PC-9 (cell line): ENCODE measurements at regions of chr3 and their contacts with region 1.

Region 1: GRCh38 chr3:184371570-184372018 is 6.4 kb downstream of the THPO start:
- DNase-seq: peak; percentile 84 to 89
- H3K4me3 ChIP-seq: no peak overlapping the region
- H3K27ac ChIP-seq: no peak overlapping the region
- H3K4me1 ChIP-seq: no peaks in the 10 kb centered on the region
- H3K27me3 ChIP-seq: peaks cover 35% of the 10 kb centered on the region
- CTCF ChIP-seq: peak; percentile 99

Region 2: GRCh38 chr3:183775781-183776180 is 595.8 kb before region 1 on chr3:
- CTCF ChIA-PET with region 1: no interaction called
- POLR2A ChIA-PET with region 1: no interaction called
- intact Hi-C with region 1: no loop called
- DNase-seq: no peak
- H3K4me3 ChIP-seq: no peak overlapping the region
- H3K27ac ChIP-seq: peak overlapping the region; percentile 5; the same call in 1 of the 2 replicates
- H3K4me1 ChIP-seq: no peaks in the 10 kb centered on the region
- H3K27me3 ChIP-seq: no peaks in the 10 kb centered on the region
- CTCF ChIP-seq: no peak

Region 3: DNA sequence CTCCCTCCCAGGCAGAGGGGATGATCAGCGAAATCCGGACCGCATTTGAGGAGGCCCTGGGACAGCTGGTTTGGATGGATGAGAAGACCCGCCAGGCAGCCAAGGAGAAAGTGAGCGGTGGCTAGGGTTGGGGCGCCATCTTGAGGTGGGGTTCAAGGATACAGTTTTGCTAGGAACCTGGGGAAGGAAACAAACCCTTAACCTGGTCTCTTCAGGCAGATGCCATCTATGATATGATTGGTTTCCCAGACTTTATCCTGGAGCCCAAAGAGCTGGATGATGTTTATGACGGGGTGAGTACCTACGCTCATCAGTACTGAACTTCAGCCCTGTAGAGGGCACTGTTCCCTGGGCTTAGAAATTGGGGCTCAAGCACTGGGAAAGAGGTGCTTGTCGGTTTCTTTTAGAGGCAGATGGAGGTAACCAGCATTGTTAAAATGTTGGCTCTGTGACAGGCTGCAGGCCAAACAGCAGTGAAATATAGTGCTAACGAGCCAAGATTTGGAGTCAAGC is 82.1 kb before region 1 on chr3:
- CTCF ChIA-PET with region 1: no interaction called
- POLR2A ChIA-PET with region 1: no interaction called
- intact Hi-C with region 1: no loop called
- DNase-seq: peak; percentile 63 to 75
- H3K4me3 ChIP-seq: no peak overlapping the region
- H3K27ac ChIP-seq: no peak overlapping the region
- H3K4me1 ChIP-seq: no peaks in the 10 kb centered on the region
- H3K27me3 ChIP-seq: no peaks in the 10 kb centered on the region; the same call in 1 of the 2 replicates
- CTCF ChIP-seq: peak; percentile 81

Region 4: GRCh38 chr3:184448311-184449160 is 76.9 kb after region 1 on chr3:
- CTCF ChIA-PET with region 1: interaction called, 3 read pairs
- POLR2A ChIA-PET with region 1: interaction called, 15 read pairs
- intact Hi-C with region 1: no loop called
- DNase-seq: peak; percentile 90 to 100
- H3K4me3 ChIP-seq: no peak overlapping the region
- H3K27ac ChIP-seq: peak overlapping the region; percentile 79
- H3K4me1 ChIP-seq: peaks cover 43% of the 10 kb centered on the region
- H3K27me3 ChIP-seq: no peaks in the 10 kb centered on the region
- CTCF ChIP-seq: no peak

Region 5: DNA sequence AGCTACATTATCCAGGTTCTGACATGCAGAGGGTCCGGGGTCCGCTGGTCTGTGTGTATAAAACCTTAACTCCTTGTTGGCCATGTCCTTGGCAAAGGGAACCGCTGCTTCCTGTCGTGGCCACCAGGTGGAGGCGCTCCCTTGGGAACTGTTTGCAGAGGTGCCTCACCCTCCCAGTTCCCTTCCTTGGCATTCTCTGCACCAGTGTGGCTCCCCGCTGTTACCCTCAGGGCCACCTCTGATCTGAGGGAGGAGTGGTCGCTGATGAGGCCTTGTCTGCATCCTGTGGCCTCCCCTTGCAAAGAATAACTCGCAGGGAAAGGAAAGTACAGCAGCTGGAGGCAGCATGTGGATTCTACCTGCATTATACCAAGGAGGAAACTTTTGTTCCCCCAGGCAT is 97.8 kb after region 1 on chr3:
- CTCF ChIA-PET with region 1: interaction called, 6 read pairs
- POLR2A ChIA-PET with region 1: interaction called, 3 read pairs
- intact Hi-C with region 1: loop called (anchors 1 kb)
- DNase-seq: peak in 1 of 2 experiments; percentile 56
- H3K4me3 ChIP-seq: no peak overlapping the region
- H3K27ac ChIP-seq: no peak overlapping the region
- H3K4me1 ChIP-seq: no peaks in the 10 kb centered on the region
- H3K27me3 ChIP-seq: peaks cover 35% of the 10 kb centered on the region
- CTCF ChIP-seq: peak; percentile 90

Region 6: GRCh38 chr3:184513276-184514170 is 141.9 kb after region 1 on chr3:
- CTCF ChIA-PET with region 1: interaction called, 45 read pairs
- POLR2A ChIA-PET with region 1: no interaction called
- intact Hi-C with region 1: loop called (anchors 1 kb)
- DNase-seq: peak; percentile 56 to 85
- H3K4me3 ChIP-seq: no peak overlapping the region
- H3K27ac ChIP-seq: no peak overlapping the region
- H3K4me1 ChIP-seq: no peaks in the 10 kb centered on the region
- H3K27me3 ChIP-seq: peaks cover 93% of the 10 kb centered on the region
- CTCF ChIP-seq: peak; percentile 94

Region 7: DNA sequence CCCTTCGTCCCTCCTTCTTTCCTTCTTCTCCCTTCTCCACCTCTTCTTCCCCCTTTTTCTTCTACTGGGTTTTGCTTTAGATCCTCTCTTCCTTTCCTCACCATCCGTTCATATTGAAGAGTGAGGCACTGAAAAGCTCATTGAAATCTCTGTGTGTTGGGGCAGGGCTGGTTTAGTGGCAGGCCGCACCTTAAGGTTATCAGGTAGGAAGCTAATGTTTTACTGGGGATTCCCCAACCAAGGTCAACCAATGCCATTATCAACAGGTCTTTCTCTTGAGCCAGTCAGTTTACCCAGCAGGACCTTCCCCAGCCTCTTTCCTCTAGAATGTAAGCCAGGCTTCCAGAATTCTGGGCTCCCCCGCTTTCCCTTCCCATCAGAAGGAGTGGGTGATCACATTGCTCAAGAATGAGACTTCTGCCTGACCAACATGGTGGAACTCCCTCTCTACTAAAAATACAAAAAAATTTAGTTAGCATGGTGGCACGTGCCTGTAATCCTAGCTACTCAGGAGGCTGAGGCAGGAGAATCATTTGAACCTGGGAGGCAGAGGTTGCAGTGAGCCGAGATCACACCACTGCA is 428.8 kb after region 1 on chr3:
- CTCF ChIA-PET with region 1: no interaction called
- POLR2A ChIA-PET with region 1: no interaction called
- intact Hi-C with region 1: loop called (anchors 5 kb)
- DNase-seq: no peak
- H3K4me3 ChIP-seq: no peak overlapping the region
- H3K27ac ChIP-seq: no peak overlapping the region
- H3K4me1 ChIP-seq: peaks cover 5% of the 10 kb centered on the region; the same call in 1 of the 2 replicates
- H3K27me3 ChIP-seq: peaks cover 22% of the 10 kb centered on the region; the same call in 1 of the 2 replicates
- CTCF ChIP-seq: no peak

Region 8: DNA sequence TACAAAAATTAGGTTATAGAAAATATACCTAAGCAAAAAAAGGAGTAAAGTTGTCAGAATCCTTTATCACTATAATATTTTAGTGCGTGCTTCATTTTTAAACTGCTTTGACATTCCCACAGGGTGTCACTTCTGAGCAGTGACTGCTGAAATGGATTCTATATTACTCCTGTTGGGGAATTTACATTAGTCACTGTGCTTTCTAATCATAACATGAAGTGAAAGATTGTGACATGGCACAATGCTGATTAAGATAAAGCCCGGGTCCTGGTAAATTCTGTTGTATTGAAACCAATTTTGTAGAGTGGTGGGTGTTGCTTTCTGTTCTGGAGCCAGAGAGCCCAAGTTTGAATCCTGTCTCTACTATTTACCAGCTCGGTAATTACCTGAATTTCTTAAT is 918.7 kb after region 1 on chr3:
- CTCF ChIA-PET with region 1: no interaction called
- POLR2A ChIA-PET with region 1: no interaction called
- intact Hi-C with region 1: no loop called
- DNase-seq: no peak
- H3K4me3 ChIP-seq: no peak overlapping the region
- H3K27ac ChIP-seq: no peak overlapping the region
- H3K4me1 ChIP-seq: no peaks in the 10 kb centered on the region
- H3K27me3 ChIP-seq: no peaks in the 10 kb centered on the region
- CTCF ChIP-seq: no peak